Endothelial cell of umbilical vein (primary cell): ENCODE measurements at regions of chr4 and their contacts with region 1.

Region 1: DNA sequence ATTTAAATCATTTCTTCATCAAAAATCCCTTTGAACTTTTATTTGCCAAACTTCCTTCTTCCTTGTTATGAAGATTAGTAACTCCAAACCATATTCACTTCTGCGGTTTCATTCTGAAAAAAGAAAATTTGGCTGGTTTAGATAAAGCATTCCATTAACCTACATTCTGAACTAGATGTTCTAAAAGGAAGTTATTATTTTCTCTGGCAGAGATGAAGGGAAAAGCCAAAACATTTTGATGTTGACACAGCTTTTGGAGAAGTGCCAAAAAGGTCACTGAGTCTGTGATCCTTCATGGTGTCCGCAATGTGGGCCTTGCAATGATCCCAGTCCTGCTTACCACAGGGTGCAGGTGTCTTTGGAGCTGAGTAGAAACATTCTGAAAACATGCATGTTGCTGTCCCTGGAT is 36.0 kb downstream of the CXCL8 start:
- DNase-seq: peak; percentile 97
- H3K4me3 ChIP-seq: no peak overlapping the region
- H3K27ac ChIP-seq: peak overlapping the region; percentile 62
- H3K4me1 ChIP-seq: peaks cover 33% of the 10 kb centered on the region
- H3K27me3 ChIP-seq: no peaks in the 10 kb centered on the region
- CTCF ChIP-seq: no peak
- POLR2A ChIP-seq: peak; percentile 49

Region 2: DNA sequence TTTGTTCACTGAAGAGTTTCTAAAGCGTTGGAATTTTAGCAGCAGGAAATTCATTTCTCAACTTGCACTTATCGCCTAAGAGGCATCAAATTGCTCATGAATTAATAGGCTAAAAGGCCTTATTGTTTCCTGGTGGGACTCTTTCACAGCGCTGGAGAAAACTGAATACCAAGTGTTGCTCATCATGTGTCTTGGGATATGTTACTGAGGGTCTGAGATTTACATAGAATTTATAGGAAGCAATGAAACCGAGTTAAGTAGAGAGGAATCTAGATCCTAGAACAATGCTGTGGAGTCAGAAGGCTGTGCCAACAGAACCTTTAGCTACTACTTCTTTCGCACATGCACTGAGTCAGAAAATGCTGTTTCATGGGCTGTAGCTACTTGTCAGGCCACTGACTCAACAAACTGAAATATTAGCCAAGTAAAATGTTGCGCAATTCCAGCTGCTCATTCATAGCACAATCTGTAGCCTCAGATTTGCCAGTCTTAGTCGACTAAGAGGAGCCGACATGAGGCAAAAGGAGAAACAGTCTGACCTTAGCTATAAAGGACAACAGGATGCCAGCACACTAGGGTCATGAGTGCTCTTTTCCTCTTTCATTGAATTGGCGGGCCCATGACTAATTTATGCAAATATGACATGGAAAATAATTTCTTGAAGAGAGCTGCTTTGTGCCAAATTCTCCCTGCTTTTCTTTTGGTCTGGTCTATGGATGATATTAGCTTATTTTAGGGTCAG is 71.8 kb before region 1 on chr4:
- CTCF ChIA-PET with region 1: no interaction called
- POLR2A ChIA-PET with region 1: no interaction called
- dilution Hi-C with region 1: no loop called
- intact Hi-C with region 1: loop called (anchors 1 kb)
- DNase-seq: peak; percentile 99
- H3K4me3 ChIP-seq: no peak overlapping the region
- H3K27ac ChIP-seq: peak overlapping the region; percentile 70
- H3K4me1 ChIP-seq: peaks cover 61% of the 10 kb centered on the region
- H3K27me3 ChIP-seq: no peaks in the 10 kb centered on the region
- CTCF ChIP-seq: no peak
- POLR2A ChIP-seq: no peak

Region 3: DNA sequence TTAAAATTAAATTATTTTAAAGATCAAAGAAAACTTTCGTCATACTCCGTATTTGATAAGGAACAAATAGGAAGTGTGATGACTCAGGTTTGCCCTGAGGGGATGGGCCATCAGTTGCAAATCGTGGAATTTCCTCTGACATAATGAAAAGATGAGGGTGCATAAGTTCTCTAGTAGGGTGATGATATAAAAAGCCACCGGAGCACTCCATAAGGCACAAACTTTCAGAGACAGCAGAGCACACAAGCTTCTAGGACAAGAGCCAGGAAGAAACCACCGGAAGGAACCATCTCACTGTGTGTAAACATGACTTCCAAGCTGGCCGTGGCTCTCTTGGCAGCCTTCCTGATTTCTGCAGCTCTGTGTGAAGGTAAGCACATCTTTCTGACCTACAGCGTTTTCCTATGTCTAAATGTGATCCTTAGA is 36.0 kb before region 1 on chr4 and contains the start of gene CXCL8:
- CTCF ChIA-PET with region 1: interaction called, 6 read pairs
- POLR2A ChIA-PET with region 1: no interaction called
- dilution Hi-C with region 1: no loop called
- intact Hi-C with region 1: loop called (anchors 1 kb)
- DNase-seq: peak; percentile 94
- H3K4me3 ChIP-seq: peak within 1 kb of the TSS in 2 of 3 experiments; percentile 20 to 62
- H3K27ac ChIP-seq: peak within 1 kb of the TSS; percentile 75
- H3K4me1 ChIP-seq: peaks cover 28% of the 10 kb centered on the region
- H3K27me3 ChIP-seq: no peaks in the 10 kb centered on the region
- CTCF ChIP-seq: no peak
- POLR2A ChIP-seq: peak; percentile 73
- total RNA-seq, gene CXCL8: 5.2 and 12.6 TPM in 2 replicates

Region 4: DNA sequence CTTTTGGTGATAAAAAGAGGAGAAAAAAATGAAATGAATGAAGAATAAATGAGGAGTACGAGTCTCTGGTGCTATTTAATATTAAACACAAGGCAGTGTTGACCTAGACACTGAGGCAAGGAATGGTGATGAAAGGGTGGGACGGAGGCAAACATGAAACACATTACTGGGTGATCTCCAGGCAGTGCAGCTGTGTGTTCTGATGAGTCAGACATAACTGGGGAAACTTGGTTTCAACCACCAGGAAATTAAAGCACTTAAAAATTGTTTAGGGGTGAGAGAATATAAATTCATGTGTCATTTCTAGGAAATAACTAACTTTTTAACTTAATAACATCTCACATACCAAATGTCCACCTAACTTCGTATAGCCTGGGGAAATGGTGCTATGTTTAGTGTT is 40.5 kb after region 1 on chr4:
- CTCF ChIA-PET with region 1: no interaction called
- POLR2A ChIA-PET with region 1: no interaction called
- dilution Hi-C with region 1: no loop called
- intact Hi-C with region 1: loop called (anchors 2 kb)
- DNase-seq: peak; percentile 79
- H3K4me3 ChIP-seq: no peak overlapping the region
- H3K27ac ChIP-seq: peak overlapping the region; percentile 44
- H3K4me1 ChIP-seq: peaks cover 18% of the 10 kb centered on the region
- H3K27me3 ChIP-seq: no peaks in the 10 kb centered on the region
- CTCF ChIP-seq: no peak
- POLR2A ChIP-seq: no peak

Region 5: GRCh38 chr4:73853246-73853704 is 77.0 kb after region 1 on chr4 and contains the start of gene PF4V1:
- CTCF ChIA-PET with region 1: no interaction called
- POLR2A ChIA-PET with region 1: no interaction called
- dilution Hi-C with region 1: no loop called
- intact Hi-C with region 1: loop called (anchors 1 kb)
- DNase-seq: peak; percentile 13
- H3K4me3 ChIP-seq: peak within 1 kb of the TSS in 1 of 3 experiments; percentile 2
- H3K27ac ChIP-seq: no peak within 1 kb of the TSS
- H3K4me1 ChIP-seq: peaks cover 11% of the 10 kb centered on the region
- H3K27me3 ChIP-seq: no peaks in the 10 kb centered on the region
- CTCF ChIP-seq: peak; percentile 14 to 45
- POLR2A ChIP-seq: no peak
- total RNA-seq, gene PF4V1: not detected in 2 replicates

Region 6: GRCh38 chr4:73922766-73923630 is 146.7 kb after region 1 on chr4:
- CTCF ChIA-PET with region 1: no interaction called
- POLR2A ChIA-PET with region 1: no interaction called
- dilution Hi-C with region 1: no loop called
- intact Hi-C with region 1: loop called (anchors 5 kb)
- DNase-seq: peak; percentile 76
- H3K4me3 ChIP-seq: no peak overlapping the region
- H3K27ac ChIP-seq: no peak overlapping the region
- H3K4me1 ChIP-seq: peaks cover 10% of the 10 kb centered on the region
- H3K27me3 ChIP-seq: no peaks in the 10 kb centered on the region
- CTCF ChIP-seq: peak; percentile 9 to 14
- POLR2A ChIP-seq: no peak

Region 7: GRCh38 chr4:74109116-74109869 is 333.0 kb after region 1 on chr4:
- CTCF ChIA-PET with region 1: no interaction called
- POLR2A ChIA-PET with region 1: no interaction called
- dilution Hi-C with region 1: no loop called
- intact Hi-C with region 1: loop called (anchors 5 kb)
- DNase-seq: peak; percentile 93
- H3K4me3 ChIP-seq: no peak overlapping the region
- H3K27ac ChIP-seq: peak overlapping the region; percentile 92
- H3K4me1 ChIP-seq: peaks cover 44% of the 10 kb centered on the region
- H3K27me3 ChIP-seq: no peaks in the 10 kb centered on the region
- CTCF ChIP-seq: no peak
- POLR2A ChIP-seq: peak; percentile 59

Region 8: DNA sequence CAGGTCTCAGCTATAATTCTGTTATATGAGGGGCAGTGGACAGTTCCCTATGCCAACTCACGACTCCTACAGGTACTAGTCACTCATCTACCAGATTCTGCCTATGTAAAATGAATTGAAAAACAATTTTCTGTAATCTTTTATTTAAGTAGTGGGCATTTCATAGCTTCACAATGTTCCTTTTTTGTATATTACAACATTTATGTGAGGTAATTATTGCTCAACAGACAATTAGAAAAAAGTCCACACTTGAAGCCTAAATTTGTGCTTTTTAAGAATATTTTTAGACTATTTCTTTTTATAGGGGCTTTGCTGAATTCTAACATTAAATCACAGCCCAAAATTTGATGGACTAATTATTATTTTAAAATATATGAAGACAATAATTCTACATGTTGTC is 609.1 kb after region 1 on chr4:
- CTCF ChIA-PET with region 1: no interaction called
- POLR2A ChIA-PET with region 1: no interaction called
- dilution Hi-C with region 1: no loop called
- intact Hi-C with region 1: no loop called
- DNase-seq: no peak
- H3K4me3 ChIP-seq: no peak overlapping the region
- H3K27ac ChIP-seq: no peak overlapping the region
- H3K4me1 ChIP-seq: no peaks in the 10 kb centered on the region
- H3K27me3 ChIP-seq: no peaks in the 10 kb centered on the region
- CTCF ChIP-seq: no peak
- POLR2A ChIP-seq: no peak